ENCODE measurements at regions of chr10 and their contacts with region 1.

Region 1: GRCh38 chr10:13056456-13057077 is 43.4 kb upstream of the OPTN start:
- DNase-seq: no peak
- ATAC-seq: peak; percentile 83
- H3K4me3 ChIP-seq: no peak overlapping the region
- H3K27ac ChIP-seq: no peak overlapping the region
- H3K4me1 ChIP-seq: no peaks in the 10 kb centered on the region
- H3K27me3 ChIP-seq: no peaks in the 10 kb centered on the region
- CTCF ChIP-seq: peak; percentile 49 to 63 (median 56); a peak in 5 of 6 replicates
- POLR2A ChIP-seq: no peak
- RAD21 ChIP-seq: peak; percentile 78

Region 2: GRCh38 chr10:12720217-12720981 is 336.2 kb before region 1 on chr10:
- CTCF ChIA-PET with region 1: interaction called, 3 read pairs
- POLR2A ChIA-PET with region 1: no interaction called
- RAD21 ChIA-PET with region 1: interaction called in 1 of 2 experiments, 3 read pairs
- intact Hi-C with region 1: loop called (anchors 1 kb)
- DNase-seq: peak; percentile 96
- ATAC-seq: peak; percentile 94
- H3K4me3 ChIP-seq: 0 out of 4 replicates have a peak overlapping the region, but pooled peaks of 1 of the 2 experiments have one; percentile 2
- H3K27ac ChIP-seq: peak overlapping the region; percentile 54; the same call in 1 of the 2 replicates
- H3K4me1 ChIP-seq: peaks cover 24 to 27% of the 10 kb centered on the region in 2 experiments
- H3K27me3 ChIP-seq: peaks cover 11% of the 10 kb centered on the region; the same call in 1 of the 2 replicates
- CTCF ChIP-seq: no peak
- POLR2A ChIP-seq: no peak
- RAD21 ChIP-seq: peak; percentile 22; the same call in 1 of the 2 replicates

Region 3: GRCh38 chr10:12782537-12782936 is 274.0 kb before region 1 on chr10:
- CTCF ChIA-PET with region 1: interaction called, 7 read pairs
- POLR2A ChIA-PET with region 1: no interaction called
- RAD21 ChIA-PET with region 1: no interaction called
- intact Hi-C with region 1: loop called (anchors 5 kb)
- DNase-seq: peak; percentile 42
- ATAC-seq: peak; percentile 91
- H3K4me3 ChIP-seq: peak overlapping the region; percentile 20 to 27; a peak in 2 of 4 replicates
- H3K27ac ChIP-seq: no peak overlapping the region
- H3K4me1 ChIP-seq: peaks cover 2 to 9% of the 10 kb centered on the region in 2 experiments; a peak in 3 of 4 replicates
- H3K27me3 ChIP-seq: no peaks in the 10 kb centered on the region
- CTCF ChIP-seq: peak; percentile 50 to 94 (median 92); a peak in 5 of 6 replicates
- POLR2A ChIP-seq: no peak
- RAD21 ChIP-seq: peak; percentile 66

Region 4: GRCh38 chr10:12984165-12984747 is 72.3 kb before region 1 on chr10:
- CTCF ChIA-PET with region 1: no interaction called
- POLR2A ChIA-PET with region 1: no interaction called
- RAD21 ChIA-PET with region 1: no interaction called
- intact Hi-C with region 1: no loop called
- DNase-seq: peak; percentile 51
- ATAC-seq: peak; percentile 56
- H3K4me3 ChIP-seq: peak overlapping the region in 1 of 2 experiments; percentile 21; a peak in 1 of 4 replicates
- H3K27ac ChIP-seq: no peak overlapping the region; the same call in 1 of the 2 replicates
- H3K4me1 ChIP-seq: peaks cover 26 to 43% of the 10 kb centered on the region in 2 experiments
- H3K27me3 ChIP-seq: no peaks in the 10 kb centered on the region
- CTCF ChIP-seq: no peak
- POLR2A ChIP-seq: no peak
- RAD21 ChIP-seq: no peak